ENCODE measurements at regions of chr11 and their contacts with region 1.

Region 1: DNA sequence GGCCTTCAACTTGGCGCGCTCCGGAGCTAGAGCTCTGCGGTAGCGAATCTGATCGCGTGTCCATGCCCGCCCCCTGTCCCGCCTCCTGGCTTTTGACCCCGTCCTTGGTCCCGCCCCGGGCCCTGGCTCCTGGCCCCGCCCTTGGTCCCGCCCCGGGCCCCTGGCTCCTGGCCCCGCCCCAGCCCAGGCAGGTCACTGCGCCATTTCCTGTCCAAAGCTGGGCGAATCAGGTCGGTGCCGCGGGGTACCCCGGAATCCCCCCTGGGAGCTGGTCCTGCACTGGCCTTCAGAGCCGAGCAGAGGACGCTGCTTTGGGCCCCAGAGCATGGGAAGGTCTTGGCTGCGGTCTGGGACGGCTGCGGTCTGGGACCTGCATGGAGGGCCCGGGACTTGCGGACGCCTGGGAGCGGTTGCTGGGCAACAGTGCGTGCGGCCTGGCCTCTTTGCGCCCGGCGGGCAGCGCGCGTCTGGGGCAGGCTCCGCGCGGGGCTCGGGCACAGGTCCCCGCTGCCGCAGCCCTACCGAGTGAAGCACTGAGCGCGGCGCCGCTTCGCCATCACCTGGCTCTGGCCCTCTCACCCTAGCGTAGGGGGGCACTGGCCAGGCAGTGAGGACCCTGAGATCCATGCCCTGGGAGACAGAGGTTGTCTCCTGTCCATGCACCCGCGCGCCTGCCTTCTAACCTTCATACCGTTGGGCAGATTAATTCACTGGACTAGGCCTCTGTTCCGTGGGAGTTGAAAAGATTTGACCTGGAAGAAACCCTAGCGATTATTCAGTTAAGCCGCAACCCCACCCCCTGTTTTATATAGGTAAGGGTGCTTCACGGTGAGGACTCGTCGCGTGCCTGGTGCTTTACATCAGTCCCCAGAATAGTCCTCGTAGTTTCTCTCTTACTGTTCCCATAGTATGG is at the start of gene TTC12:
- DNase-seq: peak; percentile 96
- H3K4me3 Mint-ChIP-seq: peak within 1 kb of the TSS; percentile 83
- H3K27ac Mint-ChIP-seq: peak within 1 kb of the TSS; percentile 77
- H3K4me1 Mint-ChIP-seq: peaks cover 23% of the 10 kb centered on the region
- H3K27me3 Mint-ChIP-seq: no peaks in the 10 kb centered on the region
- total RNA-seq, gene TTC12: 7.4 to 8.9 TPM

Region 2: DNA sequence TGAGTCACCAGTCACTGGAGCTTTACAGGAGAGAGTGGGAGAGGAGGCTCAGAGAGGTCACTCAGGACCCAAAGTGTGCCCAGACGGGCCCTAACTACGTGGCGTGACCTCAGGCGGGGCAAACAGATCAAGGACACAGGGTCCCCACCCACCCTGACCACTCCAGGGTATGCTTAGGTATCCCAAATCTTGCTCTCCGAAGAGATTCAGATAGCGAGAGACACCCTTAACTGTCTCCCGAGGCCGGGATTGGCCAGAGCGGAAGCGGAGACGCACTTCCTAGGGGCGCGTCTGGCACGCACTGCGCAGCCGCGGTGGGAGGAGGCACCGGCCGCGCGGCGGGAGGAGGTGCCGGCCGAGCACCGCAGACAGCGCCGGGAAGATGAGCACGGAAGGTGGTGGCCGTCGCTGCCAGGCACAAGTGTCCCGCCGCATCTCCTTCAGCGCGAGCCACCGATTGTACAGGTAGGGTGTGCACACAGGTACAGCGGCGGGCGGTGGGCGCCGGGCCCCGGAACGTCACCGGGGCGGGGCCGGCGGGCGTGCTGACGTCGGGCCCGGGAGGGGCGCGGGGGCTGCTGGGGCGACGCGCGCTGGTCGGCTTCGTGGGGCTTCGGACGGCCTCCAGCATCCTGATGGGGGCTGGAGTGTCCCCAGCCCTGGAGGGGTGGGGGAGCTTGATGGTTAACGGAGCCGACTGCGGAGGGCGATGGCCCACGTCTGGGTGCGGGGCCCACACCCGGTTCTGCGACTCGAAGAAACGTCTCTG is 1088.4 kb before region 1 on chr11 and contains the start of gene PTS:
- CTCF ChIA-PET with region 1: no interaction called
- POLR2A ChIA-PET with region 1: no interaction called
- intact Hi-C with region 1: loop called (anchors 1 kb)
- DNase-seq: peak; percentile 90
- H3K4me3 Mint-ChIP-seq: peak within 1 kb of the TSS; percentile 86
- H3K27ac Mint-ChIP-seq: peak within 1 kb of the TSS; percentile 92
- H3K4me1 Mint-ChIP-seq: peaks cover 21% of the 10 kb centered on the region
- H3K27me3 Mint-ChIP-seq: no peaks in the 10 kb centered on the region
- total RNA-seq, gene PTS: 28.1 to 28.5 TPM

Region 3: DNA sequence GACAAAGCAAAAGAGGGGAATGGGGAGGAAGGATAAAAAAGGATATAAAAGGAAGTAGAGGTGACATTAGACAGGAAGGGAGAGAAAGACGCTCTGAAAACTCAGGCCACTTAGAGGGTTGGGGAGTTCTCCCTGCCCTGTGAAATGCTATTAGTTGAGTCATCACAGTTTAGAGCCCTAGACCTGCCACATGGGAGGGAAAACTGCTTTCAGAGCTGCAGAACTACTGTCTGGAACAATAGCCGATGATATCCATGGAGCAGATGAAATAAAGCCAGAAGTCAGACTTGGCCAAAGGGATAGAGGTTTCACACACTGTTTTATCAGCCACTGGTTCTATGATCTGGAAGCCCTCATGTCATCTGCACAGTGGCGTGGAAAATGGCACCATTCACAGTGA is 195.6 kb before region 1 on chr11:
- CTCF ChIA-PET with region 1: no interaction called
- POLR2A ChIA-PET with region 1: no interaction called
- intact Hi-C with region 1: no loop called
- DNase-seq: no peak
- H3K4me3 Mint-ChIP-seq: no peak overlapping the region
- H3K27ac Mint-ChIP-seq: no peak overlapping the region
- H3K4me1 Mint-ChIP-seq: no peaks in the 10 kb centered on the region
- H3K27me3 Mint-ChIP-seq: peaks cover 12% of the 10 kb centered on the region

Region 4: DNA sequence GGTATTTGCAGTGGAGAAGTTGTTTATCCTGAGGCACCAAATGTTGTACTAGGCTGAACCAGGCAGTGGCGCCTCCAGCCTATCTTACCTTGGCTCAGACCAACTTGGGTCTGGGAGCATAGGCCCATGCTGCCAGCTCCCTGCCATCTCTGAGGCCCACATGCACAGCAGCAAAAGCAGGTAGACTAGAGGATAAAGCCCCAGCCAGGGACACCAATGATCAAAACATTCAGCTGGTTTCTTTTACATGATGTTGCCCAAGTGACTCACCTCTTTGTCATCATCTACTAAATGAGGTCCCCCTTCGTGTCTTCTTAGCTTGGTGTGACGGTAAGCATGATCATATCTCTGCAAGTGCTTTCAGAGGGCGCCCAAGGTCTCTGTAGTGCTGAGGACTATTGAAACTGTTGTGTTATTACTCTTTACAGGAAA is 272.7 kb after region 1 on chr11:
- CTCF ChIA-PET with region 1: no interaction called
- POLR2A ChIA-PET with region 1: no interaction called
- intact Hi-C with region 1: loop called (anchors 2 kb)
- DNase-seq: peak; percentile 73
- H3K4me3 Mint-ChIP-seq: no peak overlapping the region
- H3K27ac Mint-ChIP-seq: peak overlapping the region; percentile 76
- H3K4me1 Mint-ChIP-seq: peaks cover 16% of the 10 kb centered on the region
- H3K27me3 Mint-ChIP-seq: peaks cover 12% of the 10 kb centered on the region

Region 5: DNA sequence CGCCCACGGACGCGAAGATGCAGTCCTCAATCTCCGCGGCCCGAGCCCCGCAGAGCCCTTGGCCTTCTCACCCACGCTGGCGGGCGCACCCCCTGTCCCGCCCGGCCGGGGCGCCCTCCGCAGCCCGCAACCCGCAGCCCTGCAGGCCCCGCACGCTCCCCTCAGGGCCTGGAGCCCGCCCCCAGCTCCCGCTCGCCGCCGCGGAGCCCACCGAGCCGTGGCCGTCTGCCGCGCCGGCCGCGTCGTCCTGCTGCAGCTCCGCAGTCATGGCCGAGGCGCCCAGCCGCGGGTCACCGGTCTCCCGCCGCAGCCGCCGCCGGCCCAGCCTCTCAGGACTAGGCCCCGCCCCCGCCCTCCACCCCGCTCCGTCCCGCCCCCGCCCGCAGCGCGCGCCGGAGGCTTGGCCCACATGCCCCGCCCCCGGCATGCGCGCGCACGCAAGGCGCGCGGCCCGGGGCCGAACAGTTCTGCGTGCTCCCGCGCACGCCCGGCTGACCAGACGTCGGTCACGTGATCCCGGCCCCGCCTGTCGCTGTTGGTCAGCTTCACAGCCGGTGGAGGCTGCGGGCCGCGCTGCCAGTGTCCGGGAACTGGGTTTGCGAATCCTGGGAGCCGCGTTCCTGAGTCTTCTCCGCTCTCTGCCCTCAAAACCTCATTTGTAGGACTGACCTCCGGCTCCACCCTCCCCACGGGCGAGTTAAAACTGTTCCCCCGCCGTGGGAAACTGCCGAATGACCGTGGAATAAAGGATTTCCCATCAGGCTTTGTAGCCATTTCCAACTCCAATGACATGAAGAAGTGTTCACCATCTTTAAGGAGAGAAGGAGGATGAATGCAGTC is 560.8 kb after region 1 on chr11 and contains the start of gene USP28:
- CTCF ChIA-PET with region 1: no interaction called
- POLR2A ChIA-PET with region 1: no interaction called
- intact Hi-C with region 1: loop called (anchors 2 kb)
- DNase-seq: peak; percentile 87
- H3K4me3 Mint-ChIP-seq: peak within 1 kb of the TSS; percentile 94
- H3K27ac Mint-ChIP-seq: peak within 1 kb of the TSS; percentile 84
- H3K4me1 Mint-ChIP-seq: peaks cover 32% of the 10 kb centered on the region
- H3K27me3 Mint-ChIP-seq: no peaks in the 10 kb centered on the region
- total RNA-seq, gene USP28: 30.6 to 41.7 TPM

Region 6: GRCh38 chr11:114439229-114440120 is 1124.8 kb after region 1 on chr11 and contains the start of gene REXO2:
- CTCF ChIA-PET with region 1: no interaction called
- POLR2A ChIA-PET with region 1: no interaction called
- intact Hi-C with region 1: loop called (anchors 5 kb)
- DNase-seq: peak; percentile 96
- H3K4me3 Mint-ChIP-seq: peak within 1 kb of the TSS; percentile 97
- H3K27ac Mint-ChIP-seq: peak within 1 kb of the TSS; percentile 85
- H3K4me1 Mint-ChIP-seq: peaks cover 31% of the 10 kb centered on the region
- H3K27me3 Mint-ChIP-seq: no peaks in the 10 kb centered on the region
- total RNA-seq, gene REXO2: 60.1 to 62.0 TPM

Measured in activated CD4-positive, alpha-beta memory T cell treated with anti-CD3 and anti-CD28 coated beads for 36 hours (primary cell).